Tibial artery (tissue), 4 donors: ENCODE measurements at regions of chr3 and their contacts with region 1.

Region 1: DNA sequence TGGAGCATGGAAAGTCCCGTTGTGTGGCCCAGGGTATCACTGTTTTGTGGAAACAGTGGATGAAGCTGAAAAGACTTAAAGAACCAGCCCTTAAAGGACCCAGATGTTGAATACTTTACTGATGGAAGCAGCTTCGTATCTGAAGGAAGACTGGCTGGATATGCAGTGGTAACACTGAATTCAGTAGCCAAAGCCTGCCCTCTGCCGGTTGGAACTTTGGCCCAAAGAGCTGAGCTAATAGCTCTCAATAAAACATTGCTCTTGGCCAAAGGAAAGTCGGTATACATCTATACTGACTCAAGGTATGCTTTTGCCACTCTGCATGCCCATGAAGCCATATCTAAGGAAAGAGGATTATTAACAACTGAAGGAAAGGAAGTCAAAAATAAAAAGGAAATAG is 885.4 kb downstream of the PDCD6IP start:
- DNase-seq: peak; percentile 51 to 71
- H3K4me3 ChIP-seq: no peak overlapping the region
- H3K27ac ChIP-seq: no peak overlapping the region
- H3K4me1 ChIP-seq: no peaks in the 10 kb centered on the region
- H3K27me3 ChIP-seq: no peaks in the 10 kb centered on the region
- CTCF ChIP-seq: peak; percentile 66 to 70

Region 2: GRCh38 chr3:33883951-33884561 is 799.8 kb before region 1 on chr3:
- intact Hi-C with region 1: loop called (anchors 2 kb)
- DNase-seq: no peak
- H3K4me3 ChIP-seq: peak overlapping the region; percentile 7 to 28
- H3K27ac ChIP-seq: no peak overlapping the region
- H3K4me1 ChIP-seq: peaks cover 0 to 9% (median 5%) of the 10 kb centered on the region in 4 donors
- H3K27me3 ChIP-seq: no peaks in the 10 kb centered on the region
- CTCF ChIP-seq: no peak

Region 3: GRCh38 chr3:33975463-33975862 is 708.4 kb before region 1 on chr3:
- intact Hi-C with region 1: loop called (anchors 5 kb)
- DNase-seq: no peak
- H3K4me3 ChIP-seq: no peak overlapping the region
- H3K27ac ChIP-seq: no peak overlapping the region
- H3K4me1 ChIP-seq: no peaks in the 10 kb centered on the region
- H3K27me3 ChIP-seq: no peaks in the 10 kb centered on the region
- CTCF ChIP-seq: no peak